MCF 10A (cell line): ENCODE measurements at regions of chr14 and their contacts with region 1.

Region 1: GRCh38 chr14:53325176-53325806 is 172.2 kb upstream of the DDHD1 start:
- DNase-seq: no peak
- H3K4me3 Mint-ChIP-seq: no peak overlapping the region
- H3K27ac Mint-ChIP-seq: no peak overlapping the region
- H3K4me1 Mint-ChIP-seq: peaks cover 20% of the 10 kb centered on the region
- H3K27me3 Mint-ChIP-seq: no peaks in the 10 kb centered on the region
- CTCF ChIP-seq: no peak

Region 2: GRCh38 chr14:53103636-53104305 is 221.5 kb before region 1 on chr14:
- CTCF ChIA-PET with region 1: no interaction called
- POLR2A ChIA-PET with region 1: no interaction called
- intact Hi-C with region 1: no loop called
- DNase-seq: no peak
- H3K4me3 Mint-ChIP-seq: no peak overlapping the region
- H3K27ac Mint-ChIP-seq: no peak overlapping the region
- H3K4me1 Mint-ChIP-seq: peaks cover 9% of the 10 kb centered on the region
- H3K27me3 Mint-ChIP-seq: no peaks in the 10 kb centered on the region
- CTCF ChIP-seq: no peak

Region 3: DNA sequence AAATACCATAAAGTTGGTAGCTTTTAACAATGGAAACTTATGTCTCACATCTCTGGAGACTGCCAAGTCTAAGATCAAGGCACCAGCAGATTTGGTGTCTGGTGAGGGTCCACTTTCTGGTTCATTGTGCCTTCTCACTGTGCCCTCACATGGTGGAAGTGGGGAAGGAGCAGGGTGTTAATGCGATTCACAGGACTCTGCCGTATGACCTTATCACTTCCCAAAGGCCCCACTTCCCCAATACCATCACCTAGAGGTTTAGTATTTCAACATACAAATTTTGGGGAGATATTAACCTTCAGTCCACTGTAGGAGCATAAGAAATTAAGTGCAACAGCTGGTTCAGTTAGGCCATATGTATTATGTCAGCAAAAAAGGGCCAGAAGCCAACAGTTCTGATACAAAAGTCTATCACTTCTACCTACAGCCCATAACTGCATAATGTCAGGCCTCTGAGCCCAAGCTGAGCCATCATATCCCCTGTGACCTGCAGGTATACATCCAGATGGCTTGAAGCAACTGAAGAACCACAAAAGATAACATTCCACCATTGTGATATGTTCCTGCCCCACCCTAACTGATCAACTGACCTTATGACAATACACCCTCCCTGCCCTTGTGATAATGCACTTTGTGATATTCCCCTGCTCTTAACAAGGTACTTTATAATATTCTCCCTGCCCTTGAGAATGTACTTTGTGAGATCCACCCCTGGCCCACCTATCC is 196.8 kb before region 1 on chr14:
- CTCF ChIA-PET with region 1: no interaction called
- POLR2A ChIA-PET with region 1: no interaction called
- intact Hi-C with region 1: no loop called
- DNase-seq: no peak
- H3K4me3 Mint-ChIP-seq: no peak overlapping the region
- H3K27ac Mint-ChIP-seq: no peak overlapping the region
- H3K4me1 Mint-ChIP-seq: peaks cover 6% of the 10 kb centered on the region
- H3K27me3 Mint-ChIP-seq: no peaks in the 10 kb centered on the region
- CTCF ChIP-seq: no peak

Region 4: GRCh38 chr14:53338192-53338591 is 12.9 kb after region 1 on chr14:
- CTCF ChIA-PET with region 1: no interaction called
- POLR2A ChIA-PET with region 1: interaction called, 10 read pairs
- intact Hi-C with region 1: no loop called
- DNase-seq: peak; percentile 50
- H3K4me3 Mint-ChIP-seq: no peak overlapping the region
- H3K27ac Mint-ChIP-seq: no peak overlapping the region
- H3K4me1 Mint-ChIP-seq: peaks cover 12% of the 10 kb centered on the region
- H3K27me3 Mint-ChIP-seq: no peaks in the 10 kb centered on the region
- CTCF ChIP-seq: no peak